Heart left ventricle (tissue), 16 donors: ENCODE measurements at regions of chr4 and their contacts with region 1.

Region 1: GRCh38 chr4:13654158-13654797 is 26.8 kb upstream of the BOD1L1 start:
- DNase-seq: peak; percentile 67 to 89 (median 79)
- ATAC-seq: peak; percentile 78 to 95 (median 93)
- H3K4me3 ChIP-seq: peak overlapping the region; percentile 10 to 61 (median 52)
- H3K27ac ChIP-seq: peak overlapping the region in 1 of 12 donors; percentile 6
- H3K4me1 ChIP-seq: peaks cover 0 to 20% (median 1%) of the 10 kb centered on the region in 12 donors
- H3K27me3 ChIP-seq: no peaks in the 10 kb centered on the region
- CTCF ChIP-seq: peak; percentile 66 to 86 (median 81)
- POLR2A ChIP-seq: no peak

Region 2: DNA sequence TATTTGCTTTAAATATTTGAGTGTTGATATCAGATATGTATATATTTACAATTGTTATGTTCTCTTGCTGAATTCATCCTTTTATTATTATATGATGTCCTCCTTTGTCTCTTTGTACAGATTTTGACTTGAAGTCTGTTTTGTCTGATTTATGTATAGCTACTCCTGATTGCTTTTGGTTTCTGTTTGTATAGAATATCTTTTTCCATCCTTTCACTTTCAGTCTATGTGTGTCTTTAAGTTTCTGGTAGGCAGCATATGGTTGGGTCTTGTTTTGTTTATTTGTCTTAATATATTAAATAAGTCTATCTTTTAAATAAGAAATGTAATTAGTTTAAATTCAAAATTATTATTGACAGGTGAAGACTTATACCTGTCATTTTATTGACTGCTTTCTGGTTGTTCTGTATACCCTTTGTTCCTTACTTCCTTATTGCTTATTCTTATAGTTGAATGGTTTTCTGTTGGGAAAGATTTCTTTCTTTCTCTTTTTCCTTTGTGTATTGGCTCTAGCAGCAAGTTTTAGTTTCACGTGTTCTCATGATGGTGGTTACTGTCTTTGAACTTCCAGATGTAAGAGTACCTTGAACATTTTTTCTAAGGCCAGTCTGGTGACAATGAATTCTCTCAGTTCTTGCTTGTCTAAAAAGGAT is 201.2 kb before region 1 on chr4:
- intact Hi-C with region 1: no loop called
- DNase-seq: no peak
- ATAC-seq: no peak
- H3K4me3 ChIP-seq: no peak overlapping the region
- H3K27ac ChIP-seq: no peak overlapping the region
- H3K4me1 ChIP-seq: peaks cover 0 to 9% (median 0%) of the 10 kb centered on the region in 12 donors
- H3K27me3 ChIP-seq: no peaks in the 10 kb centered on the region
- CTCF ChIP-seq: no peak
- POLR2A ChIP-seq: no peak

Region 3: GRCh38 chr4:13830449-13830848 is 176.2 kb after region 1 on chr4:
- intact Hi-C with region 1: loop called in 4 of 10 experiments (anchors 10 kb)
- DNase-seq: no peak
- ATAC-seq: no peak
- H3K4me3 ChIP-seq: no peak overlapping the region
- H3K27ac ChIP-seq: no peak overlapping the region
- H3K4me1 ChIP-seq: peaks cover 0 to 19% (median 1%) of the 10 kb centered on the region in 12 donors
- H3K27me3 ChIP-seq: no peaks in the 10 kb centered on the region
- CTCF ChIP-seq: no peak
- POLR2A ChIP-seq: no peak

Region 4: GRCh38 chr4:13860126-13860525 is 205.8 kb after region 1 on chr4:
- intact Hi-C with region 1: loop called in 6 of 10 experiments (anchors 2 to 10 kb)
- DNase-seq: no peak
- ATAC-seq: peak in 2 of 4 donors; percentile 10 to 32
- H3K4me3 ChIP-seq: no peak overlapping the region
- H3K27ac ChIP-seq: no peak overlapping the region
- H3K4me1 ChIP-seq: no peaks in the 10 kb centered on the region
- H3K27me3 ChIP-seq: no peaks in the 10 kb centered on the region
- CTCF ChIP-seq: peak in 7 of 12 donors; percentile 15 to 49 (median 22)
- POLR2A ChIP-seq: no peak

Region 5: DNA sequence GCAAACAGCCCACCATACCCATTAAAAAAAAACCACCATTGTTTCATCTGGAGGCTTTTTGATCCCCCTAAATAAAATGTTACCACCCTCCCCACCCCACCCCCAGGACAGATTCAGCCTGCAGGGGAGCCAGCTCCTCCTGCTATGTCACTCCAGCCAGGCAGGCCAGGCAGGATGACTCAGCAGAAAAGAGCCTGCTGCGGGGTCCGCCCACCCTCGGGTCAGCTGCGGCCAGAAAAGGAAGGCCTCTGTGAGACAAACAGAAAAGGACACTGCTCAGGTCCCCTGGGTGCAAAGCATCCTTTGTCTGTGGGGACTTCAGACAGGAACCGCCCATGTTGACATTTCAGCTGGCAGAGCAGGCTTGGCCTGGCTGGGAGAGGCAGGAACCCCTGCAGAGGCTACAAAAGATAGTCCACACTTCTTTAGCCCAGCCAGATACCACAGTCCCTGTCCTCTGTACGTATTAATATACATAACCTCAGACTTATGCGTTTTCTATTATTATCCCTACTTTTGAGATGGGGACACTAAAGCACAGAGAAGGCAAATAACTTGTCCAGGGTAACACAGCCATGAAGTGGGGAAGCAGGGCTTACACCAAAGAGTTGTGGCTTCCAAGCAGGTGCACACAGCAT is 1495.7 kb after region 1 on chr4:
- intact Hi-C with region 1: loop called in 1 of 10 experiments (anchors 10 kb)
- DNase-seq: peak; percentile 82 to 89 (median 85)
- ATAC-seq: peak; percentile 81 to 95 (median 93)
- H3K4me3 ChIP-seq: no peak overlapping the region
- H3K27ac ChIP-seq: peak overlapping the region in 11 of 12 donors; percentile 22 to 73 (median 55)
- H3K4me1 ChIP-seq: peaks cover 0 to 48% (median 17%) of the 10 kb centered on the region in 12 donors
- H3K27me3 ChIP-seq: no peaks in the 10 kb centered on the region
- CTCF ChIP-seq: peak in 3 of 12 donors; percentile 17 to 23 (median 22)
- POLR2A ChIP-seq: no peak

Region 6: GRCh38 chr4:15457406-15458201 is 1803.3 kb after region 1 on chr4:
- intact Hi-C with region 1: loop called in 1 of 10 experiments (anchors 10 kb)
- DNase-seq: no peak
- ATAC-seq: peak; percentile 24 to 79 (median 73)
- H3K4me3 ChIP-seq: no peak overlapping the region
- H3K27ac ChIP-seq: peak overlapping the region in 7 of 12 donors; percentile 8 to 43 (median 21)
- H3K4me1 ChIP-seq: peaks cover 0 to 24% (median 6%) of the 10 kb centered on the region in 12 donors
- H3K27me3 ChIP-seq: no peaks in the 10 kb centered on the region
- CTCF ChIP-seq: peak; percentile 64 to 86 (median 76)
- POLR2A ChIP-seq: no peak